ENCODE measurements at regions of chr5 and their contacts with region 1.

Region 1: DNA sequence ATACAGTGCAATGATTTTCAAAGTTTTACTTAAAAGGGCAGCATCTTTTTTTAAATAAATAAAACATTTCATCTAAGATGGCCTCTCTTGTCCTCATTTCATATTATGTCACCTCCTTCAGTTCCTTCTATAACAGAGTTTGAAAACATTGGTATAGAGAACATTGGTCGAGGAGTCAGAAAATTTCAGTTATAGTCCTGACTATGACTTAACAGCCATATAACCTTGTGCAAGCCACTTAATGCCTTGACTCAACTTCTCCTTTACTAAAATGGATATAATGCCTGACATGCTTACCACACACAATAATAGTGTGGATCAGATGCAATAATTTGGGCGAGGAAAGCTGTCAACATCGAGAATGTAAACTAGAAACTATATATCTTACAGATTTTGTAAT is 22.6 kb downstream of the SSBP2 start:
- DNase-seq: no peak
- H3K4me3 ChIP-seq: no peak overlapping the region
- H3K27ac ChIP-seq: no peak overlapping the region
- H3K4me1 ChIP-seq: no peaks in the 10 kb centered on the region
- H3K27me3 ChIP-seq: no peaks in the 10 kb centered on the region
- CTCF ChIP-seq: no peak
- POLR2A ChIP-seq: no peak

Region 2: GRCh38 chr5:81397176-81397575 is 331.1 kb before region 1 on chr5:
- CTCF ChIA-PET with region 1: no interaction called
- POLR2A ChIA-PET with region 1: no interaction called
- dilution Hi-C with region 1: no loop called
- intact Hi-C with region 1: no loop called
- DNase-seq: peak; percentile 12
- H3K4me3 ChIP-seq: no peak overlapping the region
- H3K27ac ChIP-seq: no peak overlapping the region
- H3K4me1 ChIP-seq: no peaks in the 10 kb centered on the region
- H3K27me3 ChIP-seq: peaks cover 1 to 3% of the 10 kb centered on the region in 2 experiments
- CTCF ChIP-seq: no peak
- POLR2A ChIP-seq: no peak

Region 3: GRCh38 chr5:81703840-81704239 is 24.5 kb before region 1 on chr5:
- CTCF ChIA-PET with region 1: no interaction called
- POLR2A ChIA-PET with region 1: no interaction called
- dilution Hi-C with region 1: no loop called
- intact Hi-C with region 1: loop called (anchors 1 kb)
- DNase-seq: no peak
- H3K4me3 ChIP-seq: no peak overlapping the region
- H3K27ac ChIP-seq: no peak overlapping the region
- H3K4me1 ChIP-seq: no peaks in the 10 kb centered on the region
- H3K27me3 ChIP-seq: no peaks in the 10 kb centered on the region
- CTCF ChIP-seq: no peak
- POLR2A ChIP-seq: no peak

Region 4: GRCh38 chr5:81717226-81717625 is 11.1 kb before region 1 on chr5:
- CTCF ChIA-PET with region 1: no interaction called
- POLR2A ChIA-PET with region 1: no interaction called
- dilution Hi-C with region 1: no loop called
- intact Hi-C with region 1: no loop called
- DNase-seq: no peak
- H3K4me3 ChIP-seq: no peak overlapping the region
- H3K27ac ChIP-seq: no peak overlapping the region
- H3K4me1 ChIP-seq: peaks cover 10% of the 10 kb centered on the region
- H3K27me3 ChIP-seq: no peaks in the 10 kb centered on the region
- CTCF ChIP-seq: no peak
- POLR2A ChIP-seq: no peak

Measured in endothelial cell of umbilical vein (primary cell).